AG04449 (cell line): ENCODE measurements at regions of chr1 and their contacts with region 1.

Region 1: GRCh38 chr1:214328770-214329469 is 48.0 kb downstream of the SMYD2 start:
- DNase-seq: no peak
- H3K4me3 ChIP-seq: no peak overlapping the region
- CTCF ChIP-seq: peak; percentile 92

Region 2: GRCh38 chr1:213820362-213821149 is 508.4 kb before region 1 on chr1:
- CTCF ChIA-PET with region 1: no interaction called
- POLR2A ChIA-PET with region 1: no interaction called
- DNase-seq: no peak
- H3K4me3 ChIP-seq: no peak overlapping the region
- CTCF ChIP-seq: no peak

Region 3: GRCh38 chr1:214213136-214213535 is 115.8 kb before region 1 on chr1:
- CTCF ChIA-PET with region 1: interaction called, 584 read pairs
- POLR2A ChIA-PET with region 1: interaction called, 4 read pairs
- DNase-seq: no peak
- H3K4me3 ChIP-seq: no peak overlapping the region
- CTCF ChIP-seq: no peak

Region 4: GRCh38 chr1:214271174-214271858 is 57.6 kb before region 1 on chr1:
- CTCF ChIA-PET with region 1: interaction called, 51 read pairs
- POLR2A ChIA-PET with region 1: no interaction called
- DNase-seq: no peak
- H3K4me3 ChIP-seq: no peak overlapping the region
- CTCF ChIP-seq: no peak

Region 5: GRCh38 chr1:214349781-214350180 is 20.9 kb after region 1 on chr1:
- CTCF ChIA-PET with region 1: interaction called, 136 read pairs
- POLR2A ChIA-PET with region 1: interaction called, 8 read pairs
- DNase-seq: no peak
- H3K4me3 ChIP-seq: no peak overlapping the region
- CTCF ChIP-seq: no peak

Region 6: GRCh38 chr1:214454619-214455396 is 125.9 kb after region 1 on chr1:
- CTCF ChIA-PET with region 1: interaction called, 22 read pairs
- POLR2A ChIA-PET with region 1: no interaction called
- DNase-seq: no peak
- H3K4me3 ChIP-seq: no peak overlapping the region; the same call in 1 of the 2 replicates
- CTCF ChIP-seq: no peak

Region 7: DNA sequence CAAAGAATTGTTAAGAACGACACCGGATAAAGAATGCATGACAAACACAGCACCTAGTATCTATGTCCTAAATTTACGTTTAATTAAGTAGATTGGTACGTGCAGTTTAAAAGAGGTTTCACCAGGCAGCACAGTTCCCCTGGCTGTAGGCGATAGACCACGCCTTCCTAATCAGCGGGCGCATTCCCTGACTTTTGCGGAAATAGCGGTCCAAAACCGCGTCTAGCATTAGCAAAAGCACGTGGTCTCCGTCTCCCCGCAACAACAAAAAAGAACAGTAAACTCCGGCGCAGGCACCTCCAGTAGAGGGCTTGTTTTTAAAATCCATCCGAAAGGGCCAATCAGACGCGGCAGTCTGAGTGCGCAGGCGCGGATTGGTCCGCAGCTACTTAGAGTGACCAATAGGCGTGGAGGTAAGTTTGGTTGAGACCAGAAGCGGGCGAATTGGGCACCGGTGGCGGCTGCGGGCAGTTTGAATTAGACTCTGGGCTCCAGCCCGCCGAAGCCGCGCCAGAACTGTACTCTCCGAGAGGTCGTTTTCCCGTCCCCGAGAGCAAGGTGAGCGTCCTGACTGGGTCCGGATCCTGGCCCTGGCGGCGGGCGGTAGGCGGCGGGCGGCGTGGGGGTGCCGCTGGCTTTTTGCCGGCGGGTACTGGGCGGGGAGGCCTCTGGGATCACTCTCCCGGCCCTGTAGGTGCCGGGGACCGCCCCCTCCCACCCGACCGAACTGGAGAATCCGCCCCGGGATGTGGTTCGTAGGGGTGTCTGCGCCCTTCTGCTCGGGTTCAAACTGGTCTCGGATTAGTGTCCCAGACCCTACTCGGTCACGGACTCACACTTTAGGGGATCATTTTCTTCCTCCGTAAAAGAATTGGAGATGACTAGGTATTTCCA is 274.1 kb after region 1 on chr1 and contains the start of gene CENPF:
- CTCF ChIA-PET with region 1: interaction called, 31 read pairs
- POLR2A ChIA-PET with region 1: no interaction called
- DNase-seq: peak; percentile 91
- H3K4me3 ChIP-seq: peak within 1 kb of the TSS; percentile 70
- CTCF ChIP-seq: peak; percentile 21

Region 8: DNA sequence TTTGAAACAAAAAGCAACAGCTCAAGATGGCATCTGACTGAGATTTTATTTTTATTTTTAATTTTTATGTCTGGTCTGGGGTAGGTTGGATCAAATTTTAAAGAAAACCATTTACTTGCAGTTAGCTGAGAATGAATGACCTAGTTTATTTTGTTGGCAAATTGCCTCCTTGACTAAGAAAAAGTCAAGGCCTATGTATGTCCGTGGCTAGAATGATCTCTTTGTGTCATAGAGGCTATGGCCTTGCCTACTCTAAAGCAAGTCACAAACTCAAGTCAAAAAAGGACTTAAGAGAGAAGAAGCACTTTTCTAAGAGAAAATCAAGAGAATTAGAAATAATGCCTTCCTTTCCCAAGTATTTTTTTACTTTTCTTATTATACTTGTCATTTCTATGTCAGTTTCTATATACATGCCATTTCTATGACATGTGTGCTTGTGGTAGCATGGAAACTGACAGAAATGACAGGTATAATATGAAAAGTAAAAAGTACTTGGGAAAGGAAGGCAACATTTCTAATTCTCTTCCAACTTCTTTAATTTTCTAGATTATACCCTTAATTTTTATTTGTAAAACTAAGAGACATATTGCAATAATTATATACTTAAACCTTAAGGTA is 410.8 kb after region 1 on chr1:
- CTCF ChIA-PET with region 1: no interaction called
- POLR2A ChIA-PET with region 1: no interaction called
- DNase-seq: no peak
- H3K4me3 ChIP-seq: no peak overlapping the region
- CTCF ChIP-seq: no peak

Region 9: GRCh38 chr1:215526553-215527151 is 1197.7 kb after region 1 on chr1:
- CTCF ChIA-PET with region 1: interaction called, 108 read pairs
- POLR2A ChIA-PET with region 1: no interaction called
- DNase-seq: no peak
- H3K4me3 ChIP-seq: no peak overlapping the region
- CTCF ChIP-seq: peak; percentile 27